ENCODE measurements at regions of chr11 and their contacts with region 1.

Region 1: GRCh38 chr11:66744485-66745340 is 15.7 kb upstream of the SPTBN2 start:
- DNase-seq: peak; percentile 74 to 93
- H3K4me3 ChIP-seq: peak overlapping the region; percentile 99
- H3K27ac ChIP-seq: peak overlapping the region; percentile 79
- H3K4me1 ChIP-seq: peaks cover 41% of the 10 kb centered on the region
- H3K27me3 ChIP-seq: no peaks in the 10 kb centered on the region
- CTCF ChIP-seq: no peak

Region 2: GRCh38 chr11:66638177-66639065 is 106.3 kb before region 1 on chr11 and contains the start of gene RBM4:
- CTCF ChIA-PET with region 1: no interaction called
- POLR2A ChIA-PET with region 1: interaction called, 11 read pairs
- intact Hi-C with region 1: no loop called
- DNase-seq: peak; percentile 99 to 100
- H3K4me3 ChIP-seq: peak within 1 kb of the TSS; percentile 92
- H3K27ac ChIP-seq: peak within 1 kb of the TSS; percentile 68
- H3K4me1 ChIP-seq: peaks cover 38% of the 10 kb centered on the region
- H3K27me3 ChIP-seq: no peaks in the 10 kb centered on the region
- CTCF ChIP-seq: no peak
- total RNA-seq, gene RBM4: 131 and 140 TPM in 2 replicates

Region 3: GRCh38 chr11:66694732-66695207 is 49.9 kb before region 1 on chr11:
- CTCF ChIA-PET with region 1: no interaction called
- POLR2A ChIA-PET with region 1: no interaction called
- intact Hi-C with region 1: loop called (anchors 1 kb)
- DNase-seq: peak; percentile 94 to 96
- H3K4me3 ChIP-seq: no peak overlapping the region
- H3K27ac ChIP-seq: no peak overlapping the region
- H3K4me1 ChIP-seq: no peaks in the 10 kb centered on the region
- H3K27me3 ChIP-seq: no peaks in the 10 kb centered on the region
- CTCF ChIP-seq: peak; percentile 98

Region 4: DNA sequence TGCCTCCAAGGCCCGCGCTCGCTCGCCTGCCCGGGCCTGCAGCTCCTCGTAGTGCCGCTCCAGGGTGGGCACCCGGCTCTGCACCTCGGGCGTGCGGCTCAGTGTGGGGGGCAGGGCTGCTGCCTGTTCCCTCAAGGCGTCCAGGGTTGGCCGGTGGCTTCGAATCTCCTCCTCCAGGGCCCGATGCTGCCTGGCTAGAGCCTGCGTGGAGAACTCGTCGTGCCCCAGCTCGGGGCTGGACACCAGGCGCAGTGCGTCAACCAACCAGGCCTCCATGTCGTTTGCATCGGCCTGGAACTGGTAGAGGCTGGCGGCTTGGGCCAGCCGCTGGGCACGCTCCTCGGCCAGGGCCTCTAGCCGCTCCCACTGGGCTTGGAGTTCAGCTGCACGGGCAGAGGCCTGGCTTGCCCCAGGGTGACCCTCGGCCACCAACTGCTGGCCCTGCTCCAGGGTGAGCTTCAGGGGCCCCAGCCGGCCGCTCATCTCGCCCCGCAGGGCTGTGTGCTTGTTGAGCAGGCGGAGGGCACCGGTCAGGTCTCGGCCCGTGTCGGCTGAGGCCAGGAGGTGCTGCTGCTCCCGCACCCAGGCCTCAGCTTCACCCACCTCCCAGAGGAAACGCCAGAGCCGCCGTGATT is 39.9 kb before region 1 on chr11:
- CTCF ChIA-PET with region 1: no interaction called
- POLR2A ChIA-PET with region 1: no interaction called
- intact Hi-C with region 1: loop called (anchors 5 kb)
- DNase-seq: no peak
- H3K4me3 ChIP-seq: no peak overlapping the region
- H3K27ac ChIP-seq: no peak overlapping the region
- H3K4me1 ChIP-seq: peaks cover 11% of the 10 kb centered on the region
- H3K27me3 ChIP-seq: no peaks in the 10 kb centered on the region
- CTCF ChIP-seq: no peak

Region 5: DNA sequence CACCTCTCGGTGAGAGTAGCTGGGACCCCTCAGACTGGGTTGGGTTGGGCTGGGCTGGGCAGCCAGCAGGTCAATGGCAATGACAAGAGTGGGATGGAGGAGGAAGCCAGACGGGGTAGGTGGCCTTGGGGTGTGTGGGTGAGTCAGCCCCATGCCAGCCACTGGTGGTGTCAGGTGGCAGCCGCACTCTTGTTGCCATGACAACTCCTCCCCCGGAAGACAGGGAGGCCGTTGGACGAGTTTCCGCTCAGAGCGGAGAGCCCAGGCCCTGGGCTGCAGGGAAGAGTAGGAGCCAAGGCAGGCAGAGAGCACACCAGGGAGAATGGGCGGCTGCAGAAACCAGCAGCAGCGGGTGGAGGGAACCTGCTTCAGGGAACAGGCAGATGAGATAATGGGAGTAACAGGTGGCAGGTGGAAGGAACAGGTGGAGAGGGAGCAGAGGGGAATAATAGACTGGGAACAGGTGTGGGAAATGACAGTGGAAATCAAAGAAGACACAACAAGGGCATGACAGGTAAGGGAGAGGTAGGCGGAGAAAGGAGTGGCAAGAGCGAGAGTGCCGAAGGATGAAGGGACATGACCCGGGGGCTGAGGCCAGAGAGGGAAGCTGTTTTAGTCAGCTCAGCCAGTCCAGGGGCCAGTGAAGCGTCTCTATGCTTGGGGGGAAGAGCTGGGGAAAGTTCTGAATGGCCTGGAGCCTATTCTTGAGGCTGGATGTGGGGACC is 24.3 kb before region 1 on chr11:
- CTCF ChIA-PET with region 1: no interaction called
- POLR2A ChIA-PET with region 1: interaction called, 41 read pairs
- intact Hi-C with region 1: loop called (anchors 1 kb)
- DNase-seq: peak; percentile 97 to 98
- H3K4me3 ChIP-seq: peak overlapping the region; percentile 39; the same call in 1 of the 2 replicates
- H3K27ac ChIP-seq: peak overlapping the region; percentile 59
- H3K4me1 ChIP-seq: peaks cover 61% of the 10 kb centered on the region
- H3K27me3 ChIP-seq: no peaks in the 10 kb centered on the region
- CTCF ChIP-seq: no peak

Region 6: DNA sequence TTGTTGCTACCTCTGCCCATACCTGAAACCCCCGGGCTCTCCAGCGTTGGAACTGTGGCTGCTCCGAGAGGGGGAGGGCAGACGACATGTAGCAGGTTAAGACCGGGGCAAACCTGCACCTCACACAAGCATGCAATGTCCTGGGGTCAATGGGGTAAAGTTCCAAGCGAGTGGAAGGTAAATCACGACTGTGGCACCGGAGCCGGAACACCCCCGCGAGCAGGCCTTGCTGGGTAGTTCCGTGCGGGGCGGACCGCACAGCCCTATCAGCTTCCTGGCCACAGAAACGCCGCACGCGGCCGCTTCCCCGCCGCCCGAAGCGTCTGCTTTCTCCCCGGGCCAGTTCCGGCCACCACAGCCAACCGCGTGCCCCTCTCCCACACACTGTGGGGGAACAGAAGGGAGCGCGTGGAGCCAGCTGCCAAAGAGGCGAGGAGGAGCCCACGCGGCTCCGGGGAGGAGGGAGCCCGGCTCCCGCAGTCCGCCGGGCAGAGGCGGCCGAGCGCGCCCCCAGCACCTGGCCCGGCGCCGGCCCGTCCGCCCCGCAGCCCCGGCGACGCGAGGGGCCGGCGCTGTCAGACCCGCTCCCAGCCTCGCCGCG is 17.3 kb before region 1 on chr11:
- CTCF ChIA-PET with region 1: interaction called, 9 read pairs
- POLR2A ChIA-PET with region 1: interaction called, 41 read pairs
- intact Hi-C with region 1: loop called (anchors 2 kb)
- DNase-seq: no peak
- H3K4me3 ChIP-seq: peak overlapping the region; percentile 74
- H3K27ac ChIP-seq: no peak overlapping the region
- H3K4me1 ChIP-seq: peaks cover 18% of the 10 kb centered on the region
- H3K27me3 ChIP-seq: peaks cover 6% of the 10 kb centered on the region; the same call in 1 of the 2 replicates
- CTCF ChIP-seq: no peak

Region 7: GRCh38 chr11:66868726-66869566 is 124.2 kb after region 1 on chr11:
- CTCF ChIA-PET with region 1: no interaction called
- POLR2A ChIA-PET with region 1: no interaction called
- intact Hi-C with region 1: no loop called
- DNase-seq: peak in 1 of 2 experiments; percentile 74
- H3K4me3 ChIP-seq: no peak overlapping the region
- H3K27ac ChIP-seq: no peak overlapping the region
- H3K4me1 ChIP-seq: peaks cover 5% of the 10 kb centered on the region; the same call in 1 of the 2 replicates
- H3K27me3 ChIP-seq: no peaks in the 10 kb centered on the region
- CTCF ChIP-seq: peak; percentile 72